Activated CD4-positive, alpha-beta T cell treated with anti-CD3 and anti-CD28 coated beads, Interleukin-2, amount 10 ng/mL, durations not matched to agents 7 days and 5 days (primary cell): ENCODE measurements at regions of chr1 and their contacts with region 1.

Region 1: DNA sequence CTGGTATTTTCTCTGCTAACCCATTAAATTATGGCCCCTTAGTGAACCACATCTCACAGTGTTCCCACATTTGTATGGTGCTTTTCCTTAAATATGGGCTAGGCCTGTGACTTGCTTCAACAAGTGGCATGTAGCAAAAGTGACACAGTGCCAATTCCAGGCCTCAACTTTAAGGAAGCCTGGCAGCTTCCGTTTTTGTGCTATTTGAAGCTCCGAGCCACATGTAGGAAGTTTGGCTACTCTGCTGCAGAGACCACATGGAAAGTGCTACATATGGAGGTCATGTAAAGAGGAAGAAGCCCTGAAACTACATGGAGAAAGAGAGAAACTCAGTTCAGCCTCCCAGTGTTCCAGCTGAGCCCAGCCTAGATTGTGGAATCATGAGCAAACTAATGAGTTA is 28.5 kb upstream of the DR1 start:
- DNase-seq: no peak
- H3K4me3 Mint-ChIP-seq: no peak overlapping the region
- H3K27ac Mint-ChIP-seq: no peak overlapping the region
- H3K4me1 Mint-ChIP-seq: no peaks in the 10 kb centered on the region
- H3K27me3 Mint-ChIP-seq: no peaks in the 10 kb centered on the region

Region 2: GRCh38 chr1:93093332-93094006 is 223.7 kb before region 1 on chr1:
- CTCF ChIA-PET with region 1: no interaction called
- POLR2A ChIA-PET with region 1: no interaction called
- DNase-seq: no peak
- H3K4me3 Mint-ChIP-seq: no peak overlapping the region
- H3K27ac Mint-ChIP-seq: no peak overlapping the region
- H3K4me1 Mint-ChIP-seq: peaks cover 21% of the 10 kb centered on the region
- H3K27me3 Mint-ChIP-seq: no peaks in the 10 kb centered on the region

Region 3: GRCh38 chr1:93200086-93200620 is 117.1 kb before region 1 on chr1:
- CTCF ChIA-PET with region 1: no interaction called
- POLR2A ChIA-PET with region 1: no interaction called
- DNase-seq: no peak
- H3K4me3 Mint-ChIP-seq: no peak overlapping the region
- H3K27ac Mint-ChIP-seq: no peak overlapping the region
- H3K4me1 Mint-ChIP-seq: peaks cover 4% of the 10 kb centered on the region
- H3K27me3 Mint-ChIP-seq: no peaks in the 10 kb centered on the region

Region 4: DNA sequence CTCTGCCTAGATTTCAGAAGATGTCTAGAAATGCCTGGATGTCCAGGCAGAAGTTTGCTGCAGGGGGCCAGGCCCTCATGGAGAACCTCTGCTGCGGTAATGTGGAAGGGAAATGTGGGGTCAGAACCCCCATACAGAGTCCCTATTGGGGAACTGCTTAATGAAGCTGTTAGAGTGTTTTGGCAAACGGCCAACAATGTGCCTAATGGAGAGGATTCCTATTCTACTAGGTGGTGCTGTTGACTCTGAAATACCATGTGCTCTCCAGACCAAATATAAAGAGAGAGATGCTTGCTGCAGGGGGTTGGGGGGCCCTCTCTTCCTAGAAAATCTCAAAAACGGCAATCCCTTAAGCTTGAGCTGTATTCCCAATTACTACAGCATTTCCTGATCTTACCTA is 28.6 kb before region 1 on chr1:
- CTCF ChIA-PET with region 1: no interaction called
- POLR2A ChIA-PET with region 1: no interaction called
- DNase-seq: no peak
- H3K4me3 Mint-ChIP-seq: no peak overlapping the region
- H3K27ac Mint-ChIP-seq: no peak overlapping the region
- H3K4me1 Mint-ChIP-seq: no peaks in the 10 kb centered on the region
- H3K27me3 Mint-ChIP-seq: no peaks in the 10 kb centered on the region

Region 5: DNA sequence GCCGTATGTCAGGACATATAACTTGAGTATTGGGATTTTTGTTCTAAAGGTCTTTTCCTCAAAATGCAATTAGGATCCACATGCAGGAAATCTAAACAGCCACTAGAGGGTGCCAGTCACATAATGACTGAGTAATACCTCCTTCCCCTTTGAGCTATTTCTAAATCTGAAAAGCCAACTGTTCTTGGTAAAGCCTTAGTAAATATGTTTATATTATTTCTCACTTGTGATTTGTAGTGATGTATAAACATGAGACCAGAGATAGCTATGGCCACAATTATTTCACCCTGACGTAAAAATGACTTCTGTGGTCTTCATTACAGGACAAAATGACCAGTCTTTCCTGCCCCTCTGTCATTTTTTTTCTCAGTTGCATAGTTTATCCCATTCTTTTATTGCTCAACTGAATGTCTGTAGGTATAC is 12.5 kb before region 1 on chr1:
- CTCF ChIA-PET with region 1: interaction called, 10 read pairs
- POLR2A ChIA-PET with region 1: no interaction called
- DNase-seq: peak; percentile 66
- H3K4me3 Mint-ChIP-seq: no peak overlapping the region
- H3K27ac Mint-ChIP-seq: no peak overlapping the region
- H3K4me1 Mint-ChIP-seq: no peaks in the 10 kb centered on the region
- H3K27me3 Mint-ChIP-seq: no peaks in the 10 kb centered on the region